ENCODE measurements at regions of chr12 and their contacts with region 1.

Region 1: GRCh38 chr12:95187865-95188415 is 29.3 kb downstream of the FGD6 start:
- DNase-seq: no peak
- ATAC-seq: no peak
- H3K4me3 ChIP-seq: no peak overlapping the region
- H3K27ac ChIP-seq: no peak overlapping the region
- H3K4me1 ChIP-seq: peaks cover 21% of the 10 kb centered on the region
- H3K27me3 ChIP-seq: no peaks in the 10 kb centered on the region
- CTCF ChIP-seq: no peak
- EP300 ChIP-seq: no peak
- POLR2A ChIP-seq: no peak
- RAD21 ChIP-seq: no peak

Region 2: DNA sequence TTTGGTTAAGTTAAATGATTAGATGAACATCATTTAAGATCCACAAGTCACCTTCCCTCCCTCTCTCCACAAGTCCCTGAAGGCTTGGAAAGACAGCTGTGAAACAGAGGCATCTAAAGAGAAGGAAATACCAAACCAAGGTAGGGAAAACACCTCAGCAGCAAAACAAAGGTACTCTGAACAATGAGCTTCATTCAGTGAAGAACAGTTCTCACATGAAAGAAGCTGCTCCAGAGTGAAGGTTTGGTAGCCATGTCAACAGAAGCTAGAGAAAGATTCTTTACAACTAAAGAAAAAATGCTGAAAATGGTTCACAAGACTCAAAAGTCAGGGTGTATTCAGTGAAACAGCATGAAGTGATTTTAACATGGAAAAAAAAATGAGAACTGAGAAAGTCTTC is 40.1 kb before region 1 on chr12:
- CTCF ChIA-PET with region 1: interaction called, 3 read pairs
- POLR2A ChIA-PET with region 1: no interaction called
- RAD21 ChIA-PET with region 1: interaction called, 10 read pairs
- SMC1A ChIA-PET with region 1: interaction called, 4 read pairs
- in situ Hi-C with region 1: no loop called
- intact Hi-C with region 1: no loop called
- DNase-seq: no peak
- ATAC-seq: peak; percentile 70
- H3K4me3 ChIP-seq: no peak overlapping the region
- H3K27ac ChIP-seq: no peak overlapping the region
- H3K4me1 ChIP-seq: no peaks in the 10 kb centered on the region
- H3K27me3 ChIP-seq: no peaks in the 10 kb centered on the region
- CTCF ChIP-seq: no peak
- EP300 ChIP-seq: no peak
- POLR2A ChIP-seq: no peak
- RAD21 ChIP-seq: no peak

Region 3: GRCh38 chr12:95198914-95199313 is 11.0 kb after region 1 on chr12:
- CTCF ChIA-PET with region 1: interaction called, 3 read pairs
- POLR2A ChIA-PET with region 1: interaction called, 3 read pairs
- RAD21 ChIA-PET with region 1: interaction called, 3 read pairs
- SMC1A ChIA-PET with region 1: interaction called, 14 read pairs
- in situ Hi-C with region 1: no loop called
- intact Hi-C with region 1: no loop called
- DNase-seq: peak; percentile 49
- ATAC-seq: peak; percentile 86
- H3K4me3 ChIP-seq: peak overlapping the region; percentile 56; the same call in 1 of the 2 replicates
- H3K27ac ChIP-seq: peak overlapping the region; percentile 87
- H3K4me1 ChIP-seq: peaks cover 33% of the 10 kb centered on the region
- H3K27me3 ChIP-seq: no peaks in the 10 kb centered on the region
- CTCF ChIP-seq: no peak
- EP300 ChIP-seq: no peak
- POLR2A ChIP-seq: no peak
- RAD21 ChIP-seq: no peak

Region 4: DNA sequence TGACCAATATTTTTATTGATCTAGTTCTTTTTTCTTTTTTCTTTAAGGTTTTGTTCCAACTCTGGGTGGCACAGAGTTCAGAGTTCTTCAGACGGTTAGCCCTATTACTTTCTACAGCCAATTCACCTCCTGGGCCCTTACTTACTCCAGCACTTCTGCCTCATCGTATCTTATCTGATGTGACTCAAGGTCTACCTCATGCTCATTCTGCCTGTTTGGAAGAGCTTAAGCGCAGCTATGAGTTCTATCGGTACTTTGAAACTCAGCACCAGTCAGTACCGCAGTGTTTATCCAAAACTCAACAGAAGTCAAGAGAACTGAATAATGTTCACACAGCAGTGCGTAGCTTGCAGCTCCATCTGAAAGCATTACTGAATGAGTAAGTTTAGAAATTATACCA is 94.3 kb after region 1 on chr12:
- CTCF ChIA-PET with region 1: no interaction called
- POLR2A ChIA-PET with region 1: no interaction called
- RAD21 ChIA-PET with region 1: no interaction called
- SMC1A ChIA-PET with region 1: no interaction called
- in situ Hi-C with region 1: no loop called
- intact Hi-C with region 1: no loop called
- DNase-seq: no peak
- ATAC-seq: no peak
- H3K4me3 ChIP-seq: no peak overlapping the region
- H3K27ac ChIP-seq: no peak overlapping the region
- H3K4me1 ChIP-seq: no peaks in the 10 kb centered on the region
- H3K27me3 ChIP-seq: no peaks in the 10 kb centered on the region
- CTCF ChIP-seq: no peak
- EP300 ChIP-seq: no peak
- POLR2A ChIP-seq: no peak
- RAD21 ChIP-seq: no peak